Dendritic cell treated with granulocyte-macrophage colony-stimulating factor and Interleukin-4, amounts not matched to agents 40 ng/mL and 50 ng/mL, for 4 days (primary cell): ENCODE measurements at regions of chr3 and their contacts with region 1.

Region 1: GRCh38 chr3:4584456-4585249 is 91.5 kb downstream of the ITPR1 start:
- H3K4me3 Mint-ChIP-seq: peak overlapping the region; percentile 69
- H3K27ac Mint-ChIP-seq: peak overlapping the region; percentile 81
- H3K4me1 Mint-ChIP-seq: peaks cover 64% of the 10 kb centered on the region
- H3K27me3 Mint-ChIP-seq: no peaks in the 10 kb centered on the region

Region 2: GRCh38 chr3:4504340-4505261 is 80.1 kb before region 1 on chr3:
- intact Hi-C with region 1: loop called (anchors 5 kb)
- H3K4me3 Mint-ChIP-seq: peak overlapping the region; percentile 18
- H3K27ac Mint-ChIP-seq: peak overlapping the region; percentile 40
- H3K4me1 Mint-ChIP-seq: peaks cover 51% of the 10 kb centered on the region
- H3K27me3 Mint-ChIP-seq: no peaks in the 10 kb centered on the region